ENCODE measurements at regions of chr2 and their contacts with region 1.

Region 1: GRCh38 chr2:43056816-43057741 is 169.3 kb downstream of the ZFP36L2 start:
- DNase-seq: peak; percentile 79 to 98 (median 89)

Region 2: GRCh38 chr2:43100883-43101662 is 44.0 kb after region 1 on chr2:
- intact Hi-C with region 1: loop called (anchors 2 kb)
- DNase-seq: peak; percentile 86 to 99 (median 92)